ENCODE measurements at regions of chr19 and their contacts with region 1.

Region 1: DNA sequence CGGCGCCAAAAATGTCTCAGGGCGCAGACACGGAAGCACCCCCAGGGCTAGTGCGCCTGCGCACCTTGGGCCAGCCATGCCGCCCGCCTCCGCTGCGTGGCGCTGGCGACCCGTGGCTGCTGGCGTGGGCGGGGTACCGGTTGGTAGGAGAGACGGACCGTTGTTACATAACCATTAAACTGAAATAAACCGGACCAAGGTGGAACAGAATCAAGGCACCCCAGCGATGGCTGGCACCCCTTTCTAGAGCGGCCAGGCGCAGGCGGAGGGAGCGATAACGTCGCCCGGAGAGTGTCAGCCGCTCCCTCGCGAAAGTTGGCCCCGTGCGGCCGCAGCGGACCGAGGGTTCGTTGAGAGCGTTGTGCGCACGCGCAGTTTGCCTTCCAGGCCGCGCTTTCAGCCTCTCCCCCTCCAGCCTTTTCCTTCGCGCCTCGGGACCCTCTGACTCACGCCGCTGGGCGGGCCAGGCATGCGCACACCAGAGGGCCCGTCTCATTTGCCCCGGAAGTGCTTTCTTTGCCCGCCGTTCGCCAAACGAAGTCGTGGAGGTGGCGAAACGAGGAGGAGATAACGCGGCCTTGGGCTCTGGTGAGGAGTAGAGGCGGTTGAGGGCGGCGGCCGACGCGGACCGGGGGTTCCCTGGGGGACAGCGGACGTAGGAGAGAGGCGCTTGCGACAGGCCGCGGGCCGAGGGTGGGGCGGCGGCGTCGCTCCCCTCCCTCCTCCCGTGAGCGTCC is at the starts of genes PLEKHJ1 and SF3A2:
- DNase-seq: peak; percentile 96 to 100 (median 98)
- ATAC-seq: peak; percentile 81
- H3K4me3 ChIP-seq: peak within 1 kb of the TSS; percentile 75 to 83
- H3K4me3 Mint-ChIP-seq: peak within 1 kb of the TSS; percentile 97
- H3K27ac ChIP-seq: peak within 1 kb of the TSS; percentile 99
- H3K27ac Mint-ChIP-seq: peak within 1 kb of the TSS; percentile 99
- H3K4me1 ChIP-seq: peaks cover 58% of the 10 kb centered on the region
- H3K4me1 Mint-ChIP-seq: peaks cover 57% of the 10 kb centered on the region
- H3K27me3 ChIP-seq: no peaks in the 10 kb centered on the region
- H3K27me3 Mint-ChIP-seq: no peaks in the 10 kb centered on the region
- CTCF ChIP-seq: peak; percentile 99
- total RNA-seq, gene PLEKHJ1: 25.9 to 26.1 TPM
- total RNA-seq, gene SF3A2: 164 to 167 TPM

Region 2: DNA sequence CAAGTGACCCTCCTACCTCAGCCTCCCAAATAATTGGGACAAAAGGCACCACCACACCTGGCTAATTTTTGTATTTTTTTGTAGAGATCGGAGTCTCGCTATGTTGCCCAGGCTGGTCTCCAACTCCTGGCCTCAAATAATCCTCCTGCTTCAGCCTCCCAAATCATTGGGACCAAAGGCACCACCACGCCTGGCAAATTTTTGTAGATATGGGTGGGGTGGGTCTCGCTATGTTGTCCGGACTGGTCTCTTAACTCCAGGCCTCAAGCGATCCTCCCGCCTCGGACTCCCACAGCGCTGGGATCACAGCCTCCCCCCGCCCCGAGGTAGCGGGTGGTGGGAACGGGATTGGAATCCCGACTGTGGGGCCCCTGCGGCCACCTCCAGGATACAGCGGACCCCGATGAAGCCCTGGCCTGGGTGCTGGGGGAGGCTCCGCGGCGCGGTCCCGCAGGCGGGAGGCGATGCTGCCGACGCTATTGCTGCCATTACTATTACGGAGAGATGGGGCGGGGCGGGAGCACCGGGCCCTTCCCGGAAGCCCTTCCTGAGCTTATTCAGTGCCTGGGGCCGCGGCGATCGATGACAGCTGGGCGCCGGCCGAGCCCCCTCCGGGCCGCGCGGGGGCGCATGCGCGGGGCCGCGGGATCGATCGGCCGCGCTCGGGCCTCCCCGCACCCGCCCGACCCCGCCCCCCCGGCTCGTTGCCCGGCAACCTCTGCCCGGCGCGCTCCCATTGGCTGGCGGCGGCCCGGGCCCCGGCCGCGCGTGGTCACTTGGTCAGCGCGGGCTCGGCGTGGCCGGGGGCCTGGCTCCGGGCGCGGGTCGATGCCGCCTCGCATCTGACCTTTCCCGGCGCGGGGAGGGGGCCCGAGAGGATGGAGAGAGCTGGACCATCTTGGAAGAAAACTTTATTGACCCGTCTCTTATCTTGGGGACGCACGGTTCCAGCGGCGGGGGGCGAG is 511.1 kb before region 1 on chr19:
- CTCF ChIA-PET with region 1: no interaction called
- POLR2A ChIA-PET with region 1: no interaction called
- intact Hi-C with region 1: no loop called
- DNase-seq: peak in 3 of 9 experiments; percentile 9 to 54 (median 48)
- ATAC-seq: no peak
- H3K4me3 ChIP-seq: peak overlapping the region; percentile 18 to 37
- H3K4me3 Mint-ChIP-seq: peak overlapping the region; percentile 54
- H3K27ac ChIP-seq: no peak overlapping the region
- H3K27ac Mint-ChIP-seq: no peak overlapping the region
- H3K4me1 ChIP-seq: peaks cover 7% of the 10 kb centered on the region
- H3K4me1 Mint-ChIP-seq: peaks cover 4% of the 10 kb centered on the region
- H3K27me3 ChIP-seq: peaks cover 19 to 32% of the 10 kb centered on the region in 2 experiments
- H3K27me3 Mint-ChIP-seq: peaks cover 52% of the 10 kb centered on the region
- CTCF ChIP-seq: no peak

Region 3: GRCh38 chr19:1905071-1905862 is 331.2 kb before region 1 on chr19 and contains the starts of genes ADAT3 and SCAMP4:
- CTCF ChIA-PET with region 1: no interaction called
- POLR2A ChIA-PET with region 1: no interaction called
- intact Hi-C with region 1: loop called in 1 of 2 experiments (anchors 10 kb)
- DNase-seq: peak; percentile 97 to 99 (median 98)
- ATAC-seq: peak; percentile 99
- H3K4me3 ChIP-seq: peak within 1 kb of the TSS; percentile 61 to 67
- H3K4me3 Mint-ChIP-seq: peak within 1 kb of the TSS; percentile 89
- H3K27ac ChIP-seq: peak within 1 kb of the TSS; percentile 54 to 81
- H3K27ac Mint-ChIP-seq: peak within 1 kb of the TSS; percentile 85
- H3K4me1 ChIP-seq: peaks cover 38% of the 10 kb centered on the region
- H3K4me1 Mint-ChIP-seq: peaks cover 34% of the 10 kb centered on the region
- H3K27me3 ChIP-seq: no peaks in the 10 kb centered on the region
- H3K27me3 Mint-ChIP-seq: no peaks in the 10 kb centered on the region
- CTCF ChIP-seq: no peak
- total RNA-seq, gene ADAT3: 6.4 to 7.3 TPM
- total RNA-seq, gene SCAMP4: 18.5 to 19.2 TPM

Region 4: DNA sequence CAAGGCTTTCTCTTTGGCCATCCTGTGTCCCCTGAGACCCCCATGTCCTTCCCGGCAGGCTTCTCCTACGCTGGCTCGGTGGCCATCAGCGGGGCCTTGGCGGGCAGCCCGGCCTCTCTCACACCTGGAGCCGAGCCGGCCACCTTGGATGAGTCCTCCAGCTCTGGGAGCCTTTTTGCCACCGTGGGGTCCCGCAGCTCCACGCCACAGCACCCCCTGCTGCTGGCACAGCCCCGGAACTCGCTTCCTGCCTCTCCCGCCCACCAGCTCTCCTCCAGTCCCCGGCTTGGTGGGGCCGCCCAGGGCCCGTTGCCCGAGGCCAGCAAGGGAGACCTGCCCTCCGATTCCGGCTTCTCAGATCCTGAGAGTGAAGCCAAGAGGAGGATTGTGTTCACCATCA is 14.6 kb before region 1 on chr19:
- CTCF ChIA-PET with region 1: no interaction called
- POLR2A ChIA-PET with region 1: no interaction called
- intact Hi-C with region 1: no loop called
- DNase-seq: no peak
- ATAC-seq: no peak
- H3K4me3 ChIP-seq: no peak overlapping the region
- H3K4me3 Mint-ChIP-seq: no peak overlapping the region
- H3K27ac ChIP-seq: no peak overlapping the region
- H3K27ac Mint-ChIP-seq: no peak overlapping the region
- H3K4me1 ChIP-seq: no peaks in the 10 kb centered on the region
- H3K4me1 Mint-ChIP-seq: peaks cover 6% of the 10 kb centered on the region
- H3K27me3 ChIP-seq: no peaks in the 10 kb centered on the region
- H3K27me3 Mint-ChIP-seq: no peaks in the 10 kb centered on the region
- CTCF ChIP-seq: no peak

Region 5: DNA sequence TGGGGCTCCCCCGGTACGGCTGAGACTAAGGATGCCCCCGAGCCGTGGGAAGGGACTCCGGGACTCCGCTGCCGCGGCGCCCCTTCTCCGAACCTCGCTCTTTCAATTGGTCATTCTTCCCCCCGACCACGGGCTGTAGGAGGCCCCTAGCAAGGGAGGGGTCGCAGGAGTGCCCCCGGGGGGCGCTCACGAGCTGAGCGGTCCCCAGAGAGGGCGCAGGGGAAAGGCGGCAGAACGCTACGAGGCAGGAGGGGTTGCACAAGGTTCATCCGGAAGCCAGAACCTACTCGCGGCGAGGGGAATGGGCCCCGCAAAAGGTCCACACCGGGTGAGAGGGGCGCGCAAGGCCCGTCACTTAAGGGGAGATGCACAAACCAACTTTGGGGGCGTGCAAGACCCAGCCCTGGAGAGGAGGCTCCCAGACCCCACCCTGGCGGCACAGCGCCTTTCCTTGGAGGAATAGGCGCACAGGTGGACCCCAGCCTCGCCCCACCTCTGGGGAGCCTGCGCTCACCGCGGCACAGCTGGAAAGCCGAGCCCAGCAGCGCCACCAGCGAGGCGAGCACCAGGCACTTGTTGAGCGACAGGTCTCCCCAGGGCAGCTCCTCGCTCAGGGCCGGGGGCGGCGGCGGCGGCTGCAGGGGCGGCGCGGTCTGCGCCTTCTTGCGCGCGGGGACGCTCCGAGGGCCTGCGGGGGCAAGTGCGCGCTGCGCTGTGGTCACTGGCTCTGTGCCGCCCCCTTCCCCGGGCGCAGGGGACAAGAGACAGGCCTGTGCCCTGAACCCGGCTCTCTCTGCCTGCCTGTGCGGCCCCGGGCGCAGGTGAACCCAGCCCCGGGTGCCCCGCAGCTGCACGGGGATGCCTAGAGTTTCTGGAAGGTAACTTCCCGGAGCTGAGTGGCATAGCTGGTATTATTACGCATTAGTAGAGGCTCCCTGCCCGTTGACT is 16.9 kb after region 1 on chr19:
- CTCF ChIA-PET with region 1: interaction called, 39 read pairs
- POLR2A ChIA-PET with region 1: interaction called, 45 read pairs
- intact Hi-C with region 1: loop called (anchors 1 kb)
- DNase-seq: peak in 8 of 9 experiments; percentile 44 to 82 (median 66)
- ATAC-seq: peak; percentile 61
- H3K4me3 ChIP-seq: peak overlapping the region; percentile 50 to 71
- H3K4me3 Mint-ChIP-seq: peak overlapping the region; percentile 78
- H3K27ac ChIP-seq: no peak overlapping the region
- H3K27ac Mint-ChIP-seq: no peak overlapping the region
- H3K4me1 ChIP-seq: peaks cover 47% of the 10 kb centered on the region
- H3K4me1 Mint-ChIP-seq: peaks cover 19% of the 10 kb centered on the region
- H3K27me3 ChIP-seq: peaks cover 16 to 26% of the 10 kb centered on the region in 2 experiments
- H3K27me3 Mint-ChIP-seq: no peaks in the 10 kb centered on the region
- CTCF ChIP-seq: peak; percentile 55

Region 6: GRCh38 chr19:2328401-2329148 is 92.1 kb after region 1 on chr19 and contains the starts of genes LSM7 and SPPL2B:
- CTCF ChIA-PET with region 1: no interaction called
- POLR2A ChIA-PET with region 1: interaction called, 5 read pairs
- intact Hi-C with region 1: loop called (anchors 1 kb)
- DNase-seq: peak; percentile 81 to 96 (median 93)
- ATAC-seq: peak; percentile 62
- H3K4me3 ChIP-seq: peak within 1 kb of the TSS; percentile 77 to 93
- H3K4me3 Mint-ChIP-seq: peak within 1 kb of the TSS; percentile 97
- H3K27ac ChIP-seq: peak within 1 kb of the TSS; percentile 71 to 82
- H3K27ac Mint-ChIP-seq: peak within 1 kb of the TSS; percentile 99
- H3K4me1 ChIP-seq: peaks cover 60% of the 10 kb centered on the region
- H3K4me1 Mint-ChIP-seq: peaks cover 62% of the 10 kb centered on the region
- H3K27me3 ChIP-seq: no peaks in the 10 kb centered on the region
- H3K27me3 Mint-ChIP-seq: no peaks in the 10 kb centered on the region
- CTCF ChIP-seq: no peak
- total RNA-seq, gene LSM7: 103 to 113 TPM
- total RNA-seq, gene SPPL2B: 123 to 126 TPM

Region 7: DNA sequence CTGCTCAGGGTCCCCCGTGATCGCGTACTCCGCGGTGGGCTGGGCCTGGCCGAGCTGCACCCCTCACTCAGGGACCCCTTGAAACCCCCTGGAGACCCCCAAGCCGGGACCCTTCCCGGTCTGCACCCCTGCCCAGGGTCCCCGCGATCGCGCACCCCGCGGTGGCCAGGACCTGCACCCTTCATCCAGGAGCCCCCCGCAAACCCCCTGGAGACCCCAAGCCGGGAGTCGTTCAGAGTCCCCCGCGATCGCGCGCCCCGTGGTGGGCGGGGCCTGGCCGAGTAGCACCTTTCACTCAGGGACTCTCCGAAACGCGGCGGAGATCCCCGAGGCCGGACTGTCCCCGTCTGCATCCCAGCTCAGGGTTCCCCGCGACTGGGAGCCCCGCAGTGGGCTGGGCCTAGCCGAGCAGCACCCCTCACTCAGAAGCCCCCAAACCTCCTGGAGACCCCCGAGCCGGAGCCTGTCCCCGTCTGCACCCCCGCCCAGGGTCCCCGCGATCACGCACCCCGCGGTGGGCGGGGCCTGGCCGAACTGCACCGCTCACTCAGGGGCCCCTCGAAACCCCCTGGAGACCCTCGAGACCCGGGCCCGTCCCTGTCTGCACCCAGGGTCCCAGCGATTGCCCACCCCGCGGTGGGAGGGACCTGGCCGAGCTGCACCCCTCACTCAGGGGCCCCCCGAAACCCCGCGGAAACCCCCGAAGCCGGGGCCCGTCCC is 219.5 kb after region 1 on chr19:
- CTCF ChIA-PET with region 1: no interaction called
- POLR2A ChIA-PET with region 1: no interaction called
- intact Hi-C with region 1: loop called in 1 of 2 experiments (anchors 5 kb)
- DNase-seq: peak in 7 of 9 experiments; percentile 22 to 87 (median 52)
- ATAC-seq: peak; percentile 41
- H3K4me3 ChIP-seq: peak overlapping the region; percentile 62 to 80
- H3K4me3 Mint-ChIP-seq: peak overlapping the region; percentile 83
- H3K27ac ChIP-seq: peak overlapping the region; percentile 32 to 50
- H3K27ac Mint-ChIP-seq: peak overlapping the region; percentile 75
- H3K4me1 ChIP-seq: peaks cover 14% of the 10 kb centered on the region
- H3K4me1 Mint-ChIP-seq: peaks cover 13% of the 10 kb centered on the region
- H3K27me3 ChIP-seq: no peaks in the 10 kb centered on the region
- H3K27me3 Mint-ChIP-seq: no peaks in the 10 kb centered on the region
- CTCF ChIP-seq: no peak

Region 8: DNA sequence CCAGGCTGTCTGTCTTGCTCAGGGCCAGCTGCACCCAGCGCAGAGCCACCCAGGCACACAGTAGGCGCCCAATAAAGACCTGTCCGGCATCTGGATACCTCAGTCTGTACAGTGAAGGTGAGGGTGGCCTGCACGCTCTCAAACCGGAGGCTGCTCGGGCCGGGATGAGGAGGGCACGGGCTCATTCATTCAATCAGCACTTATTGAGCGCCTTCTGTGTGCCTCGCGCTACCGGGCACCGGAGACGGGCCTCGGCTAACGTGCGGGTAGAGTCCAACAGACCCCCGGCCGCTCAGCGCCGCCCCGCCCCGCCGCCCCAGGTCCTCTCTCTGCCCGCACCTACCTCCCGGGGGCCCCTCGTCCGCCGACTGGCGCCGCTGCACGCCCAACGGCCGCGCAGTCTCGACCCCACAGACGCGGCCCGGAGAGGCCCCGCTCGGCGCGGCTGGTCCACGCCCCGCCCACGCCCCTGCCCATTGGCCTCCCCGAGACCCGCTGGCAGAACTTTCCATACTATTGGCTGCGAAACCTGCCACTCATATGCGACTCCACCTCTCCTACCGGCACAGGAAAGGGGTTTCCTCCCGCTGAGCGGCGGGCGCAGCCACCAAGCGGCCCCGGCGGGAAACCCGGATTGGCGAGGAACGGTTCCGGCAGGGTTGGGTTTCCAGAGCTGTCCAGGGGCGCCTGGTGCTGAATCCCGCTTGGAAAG is 503.3 kb after region 1 on chr19 and contains the start of gene SLC39A3:
- CTCF ChIA-PET with region 1: no interaction called
- POLR2A ChIA-PET with region 1: no interaction called
- intact Hi-C with region 1: loop called in 1 of 2 experiments (anchors 1 kb)
- DNase-seq: peak; percentile 98 to 99 (median 99)
- ATAC-seq: peak; percentile 100
- H3K4me3 ChIP-seq: peak within 1 kb of the TSS; percentile 80 to 93
- H3K4me3 Mint-ChIP-seq: peak within 1 kb of the TSS; percentile 86
- H3K27ac ChIP-seq: peak within 1 kb of the TSS; percentile 38 to 45
- H3K27ac Mint-ChIP-seq: no peak within 1 kb of the TSS
- H3K4me1 ChIP-seq: peaks cover 9% of the 10 kb centered on the region
- H3K4me1 Mint-ChIP-seq: peaks cover 24% of the 10 kb centered on the region
- H3K27me3 ChIP-seq: peaks cover 0 to 7% of the 10 kb centered on the region in 2 experiments
- H3K27me3 Mint-ChIP-seq: peaks cover 15% of the 10 kb centered on the region
- CTCF ChIP-seq: no peak
- total RNA-seq, gene SLC39A3: 11.7 to 12.0 TPM

Measured in CD8-positive, alpha-beta T cell (primary cell).